GM12878 (cell line): ENCODE measurements at regions of chr17 and their contacts with region 1.

Region 1: DNA sequence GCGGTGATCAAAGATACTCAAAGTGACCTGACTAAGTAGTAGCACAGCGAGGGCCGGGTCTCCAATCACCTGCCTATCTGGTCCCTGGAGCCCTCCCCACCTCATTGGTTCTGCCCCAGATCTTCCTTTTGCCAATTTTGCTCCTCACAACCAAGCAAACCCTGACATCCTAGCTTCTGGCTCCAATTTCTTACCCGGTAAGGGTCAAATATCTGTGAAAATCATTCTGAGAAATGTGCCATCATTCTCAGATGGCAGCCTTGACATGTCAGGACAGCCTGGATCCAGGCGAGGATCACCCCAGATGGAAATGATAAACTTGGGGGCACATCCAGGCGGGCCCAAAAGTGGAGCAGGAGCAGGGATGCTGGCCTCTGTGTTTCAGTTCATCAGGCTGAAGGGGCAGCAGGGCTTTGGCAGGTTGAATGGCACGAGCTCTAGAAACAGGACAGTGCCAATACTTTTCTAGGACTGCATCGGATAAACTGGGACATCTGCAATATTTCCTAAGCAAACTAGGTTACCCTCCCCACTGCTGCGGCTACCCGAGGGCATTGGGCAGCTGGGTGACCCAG is 83.9 kb downstream of the SHISA6 start:
- DNase-seq: no peak
- ATAC-seq: no peak
- H3K4me3 ChIP-seq: no peak overlapping the region
- H3K27ac ChIP-seq: no peak overlapping the region
- H3K4me1 ChIP-seq: no peaks in the 10 kb centered on the region
- H3K27me3 ChIP-seq: no peaks in the 10 kb centered on the region
- CTCF ChIP-seq: no peak
- EP300 ChIP-seq: no peak
- POLR2A ChIP-seq: no peak
- RAD21 ChIP-seq: no peak

Region 2: GRCh38 chr17:11238705-11239104 is 86.2 kb before region 1 on chr17:
- CTCF ChIA-PET with region 1: no interaction called
- POLR2A ChIA-PET with region 1: no interaction called
- RAD21 ChIA-PET with region 1: no interaction called
- SMC1A ChIA-PET with region 1: no interaction called
- in situ Hi-C with region 1: loop called (anchors 10 kb)
- intact Hi-C with region 1: no loop called
- DNase-seq: no peak
- ATAC-seq: no peak
- H3K4me3 ChIP-seq: no peak overlapping the region
- H3K27ac ChIP-seq: no peak overlapping the region
- H3K4me1 ChIP-seq: no peaks in the 10 kb centered on the region
- H3K27me3 ChIP-seq: no peaks in the 10 kb centered on the region
- CTCF ChIP-seq: no peak
- EP300 ChIP-seq: no peak
- POLR2A ChIP-seq: no peak
- RAD21 ChIP-seq: no peak

Region 3: GRCh38 chr17:11264183-11264871 is 60.6 kb before region 1 on chr17:
- CTCF ChIA-PET with region 1: no interaction called
- POLR2A ChIA-PET with region 1: no interaction called
- RAD21 ChIA-PET with region 1: no interaction called
- SMC1A ChIA-PET with region 1: no interaction called
- in situ Hi-C with region 1: no loop called
- intact Hi-C with region 1: no loop called
- DNase-seq: no peak
- ATAC-seq: no peak
- H3K4me3 ChIP-seq: no peak overlapping the region
- H3K27ac ChIP-seq: no peak overlapping the region
- H3K4me1 ChIP-seq: no peaks in the 10 kb centered on the region
- H3K27me3 ChIP-seq: no peaks in the 10 kb centered on the region
- CTCF ChIP-seq: peak in 2 of 3 experiments; percentile 18 to 26; a peak in 1 of 6 replicates
- EP300 ChIP-seq: no peak
- POLR2A ChIP-seq: no peak
- RAD21 ChIP-seq: no peak